ENCODE measurements at regions of chr3 and their contacts with region 1.

Region 1: GRCh38 chr3:71168880-71169411 is 414.6 kb downstream of the FOXP1 start:
- DNase-seq: no peak
- ATAC-seq: no peak
- H3K4me3 ChIP-seq: peak overlapping the region in 1 of 2 donors; percentile 41
- H3K27ac ChIP-seq: peak overlapping the region; percentile 95 to 99
- H3K4me1 ChIP-seq: peaks cover 4 to 27% of the 10 kb centered on the region in 2 donors
- H3K27me3 ChIP-seq: no peaks in the 10 kb centered on the region

Region 2: GRCh38 chr3:70464876-70465275 is 704.1 kb before region 1 on chr3:
- intact Hi-C with region 1: no loop called
- DNase-seq: no peak
- ATAC-seq: no peak
- H3K4me3 ChIP-seq: no peak overlapping the region
- H3K27ac ChIP-seq: no peak overlapping the region
- H3K4me1 ChIP-seq: no peaks in the 10 kb centered on the region
- H3K27me3 ChIP-seq: no peaks in the 10 kb centered on the region

Region 3: GRCh38 chr3:71208211-71209108 is 39.5 kb after region 1 on chr3:
- intact Hi-C with region 1: loop called in 1 of 2 experiments (anchors 5 kb)
- DNase-seq: no peak
- ATAC-seq: no peak
- H3K4me3 ChIP-seq: no peak overlapping the region
- H3K27ac ChIP-seq: peak overlapping the region in 1 of 2 donors; percentile 17
- H3K4me1 ChIP-seq: peaks cover 7 to 12% of the 10 kb centered on the region in 2 donors
- H3K27me3 ChIP-seq: no peaks in the 10 kb centered on the region

Region 4: DNA sequence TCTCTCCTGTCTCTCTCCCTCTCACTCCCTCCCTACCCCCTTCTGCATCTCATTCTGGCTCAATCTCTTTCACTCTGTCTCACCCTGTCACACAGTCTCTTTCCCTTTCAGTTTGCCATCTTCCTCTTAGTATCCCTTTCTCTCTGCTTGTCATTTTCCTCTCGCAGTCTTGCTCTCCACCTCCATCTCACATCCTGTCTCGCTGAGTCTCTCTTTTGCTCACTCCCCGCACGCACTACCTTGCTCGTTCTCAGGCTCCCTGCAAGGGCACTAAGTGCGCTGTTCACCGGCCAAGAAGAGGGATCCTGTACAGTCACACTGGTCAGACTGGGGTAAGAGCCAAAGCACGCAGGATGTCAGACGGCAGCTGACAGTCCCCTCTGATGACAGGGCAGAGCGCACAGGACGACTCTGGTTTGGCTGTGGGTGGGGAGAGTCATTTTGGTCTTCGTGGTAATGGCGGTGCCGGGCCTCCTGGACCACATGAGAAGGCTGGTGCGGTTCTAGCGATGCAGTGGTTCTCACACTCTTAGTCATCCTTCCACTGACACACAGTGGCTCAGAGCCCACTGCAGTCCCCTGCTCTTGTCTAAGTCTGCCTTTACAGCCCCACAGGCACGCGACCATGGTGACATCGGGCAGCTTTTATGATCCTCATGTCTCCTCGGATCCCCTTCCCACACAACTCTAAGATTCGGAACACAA is 57.8 kb after region 1 on chr3:
- intact Hi-C with region 1: loop called in 1 of 2 experiments (anchors 5 kb)
- DNase-seq: peak; percentile 78 to 83
- ATAC-seq: peak; percentile 63
- H3K4me3 ChIP-seq: no peak overlapping the region
- H3K27ac ChIP-seq: peak overlapping the region; percentile 80 to 83
- H3K4me1 ChIP-seq: peaks cover 3 to 9% of the 10 kb centered on the region in 2 donors
- H3K27me3 ChIP-seq: no peaks in the 10 kb centered on the region

Measured in aorta (tissue), 5 donors.